ENCODE measurements at regions of chr19 and their contacts with region 1.

Region 1: GRCh38 chr19:49665351-49666119 is at the starts of genes BCL2L12 and IRF3:
- DNase-seq: peak; percentile 88 to 98
- H3K4me3 ChIP-seq: peak within 1 kb of the TSS; percentile 83
- H3K27ac ChIP-seq: peak within 1 kb of the TSS; percentile 87 to 89
- H3K4me1 ChIP-seq: peaks cover 0 to 18% of the 10 kb centered on the region in 2 donors
- H3K27me3 ChIP-seq: no peaks in the 10 kb centered on the region
- CTCF ChIP-seq: no peak
- total RNA-seq, gene BCL2L12: 0.64 TPM
- total RNA-seq, gene IRF3: 75.9 TPM

Region 2: DNA sequence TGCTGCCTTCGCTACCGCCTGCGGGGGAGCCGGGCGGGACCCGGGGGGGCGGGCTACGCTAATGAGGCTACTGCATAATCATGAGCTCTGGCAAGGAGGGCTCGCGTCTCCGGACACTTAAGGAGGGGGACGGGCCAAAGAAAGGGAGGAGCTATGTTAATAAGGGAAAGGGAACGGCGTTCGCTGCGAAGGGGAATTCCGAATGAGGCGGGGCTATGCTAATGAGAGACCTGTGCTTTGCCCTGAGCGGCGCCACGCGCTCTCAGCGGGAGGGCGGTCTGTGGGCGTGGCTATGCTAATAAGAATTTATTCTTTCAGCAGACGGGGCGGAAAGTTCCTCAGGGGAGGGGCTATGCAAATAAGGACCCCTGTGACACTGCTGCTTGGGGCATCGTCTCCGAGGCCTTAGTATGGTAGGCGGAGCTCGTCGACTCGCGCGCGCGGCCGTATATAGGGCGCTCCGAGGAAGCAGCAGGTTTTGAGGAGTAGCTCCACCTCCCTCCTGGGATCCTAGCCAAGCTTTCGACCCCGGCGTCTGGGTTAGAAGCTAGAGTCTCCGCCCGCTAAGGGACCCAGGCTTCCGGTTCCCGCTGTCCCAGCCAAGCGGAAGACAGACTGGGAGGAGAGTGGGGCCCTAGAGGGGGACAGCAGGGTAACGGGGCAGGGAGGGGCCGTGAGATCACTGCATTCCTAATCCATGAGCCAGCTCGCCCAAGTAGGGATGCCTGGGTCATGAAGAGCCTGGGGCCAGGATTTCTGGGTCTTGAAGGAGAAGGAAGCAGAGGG is 25.2 kb before region 1 on chr19 and contains the start of gene RRAS:
- intact Hi-C with region 1: loop called (anchors 1 kb)
- DNase-seq: peak; percentile 99 to 100
- H3K4me3 ChIP-seq: peak within 1 kb of the TSS; percentile 80 to 87
- H3K27ac ChIP-seq: peak within 1 kb of the TSS; percentile 99 to 100
- H3K4me1 ChIP-seq: peaks cover 20 to 24% of the 10 kb centered on the region in 2 donors
- H3K27me3 ChIP-seq: no peaks in the 10 kb centered on the region
- CTCF ChIP-seq: no peak
- total RNA-seq, gene RRAS: 161 TPM

Measured in ascending aorta (tissue), 2 donors.